ENCODE measurements at regions of chr6 and their contacts with region 1.

Region 1: DNA sequence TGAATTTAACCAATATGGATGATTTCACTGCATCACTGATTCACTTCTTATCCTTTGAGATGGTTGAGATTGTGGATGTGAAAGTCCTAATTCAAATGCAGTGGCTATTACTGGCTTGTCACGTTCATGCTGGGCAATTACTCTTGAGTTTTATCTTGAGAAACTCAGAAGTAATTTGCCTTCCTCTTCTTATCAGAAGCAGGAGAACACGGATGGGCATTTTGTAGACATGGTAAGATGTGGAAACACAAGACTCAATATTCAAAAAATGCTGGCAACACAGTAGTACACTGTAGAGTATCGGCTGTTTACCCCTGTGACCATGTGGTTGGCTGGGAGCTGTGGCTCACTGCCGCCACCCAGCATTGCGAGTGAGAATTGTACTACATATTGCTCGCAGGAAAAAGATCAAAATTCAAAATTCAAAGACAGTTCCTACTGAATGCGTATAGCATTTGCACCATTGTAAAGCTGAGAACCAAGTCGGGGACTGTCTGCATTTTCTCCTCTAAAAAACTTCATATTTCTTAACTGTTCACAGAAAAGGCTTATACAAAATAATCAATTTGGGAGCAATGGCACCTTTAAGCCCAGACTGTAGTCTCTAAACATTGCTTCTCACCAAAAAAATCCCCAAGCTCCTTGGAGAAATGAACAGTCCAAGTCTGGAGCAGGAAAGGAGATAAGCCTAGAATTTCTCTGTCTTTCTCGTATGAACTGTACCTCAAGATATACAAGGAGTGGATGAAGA is 61.9 kb upstream of the ELOVL5 start:
- DNase-seq: peak; percentile 85
- H3K4me3 Mint-ChIP-seq: no peak overlapping the region
- H3K27ac Mint-ChIP-seq: no peak overlapping the region
- H3K4me1 Mint-ChIP-seq: no peaks in the 10 kb centered on the region
- H3K27me3 Mint-ChIP-seq: peaks cover 3% of the 10 kb centered on the region

Region 2: GRCh38 chr6:53302678-53303360 is 107.9 kb before region 1 on chr6:
- intact Hi-C with region 1: loop called (anchors 2 kb)
- DNase-seq: peak; percentile 69
- H3K4me3 Mint-ChIP-seq: peak overlapping the region; percentile 68
- H3K27ac Mint-ChIP-seq: peak overlapping the region; percentile 65
- H3K4me1 Mint-ChIP-seq: peaks cover 64% of the 10 kb centered on the region
- H3K27me3 Mint-ChIP-seq: no peaks in the 10 kb centered on the region

Measured in activated CD4-positive, alpha-beta T cell treated with anti-CD3 and anti-CD28 coated beads, Interleukin-2, amount 10 ng/mL, durations not matched to agents 24 days and 14 days (primary cell).